Activated naive CD4-positive, alpha-beta T cell treated with anti-CD3 and anti-CD28 coated beads for 36 hours (primary cell): ENCODE measurements at regions of chr17 and their contacts with region 1.

Region 1: DNA sequence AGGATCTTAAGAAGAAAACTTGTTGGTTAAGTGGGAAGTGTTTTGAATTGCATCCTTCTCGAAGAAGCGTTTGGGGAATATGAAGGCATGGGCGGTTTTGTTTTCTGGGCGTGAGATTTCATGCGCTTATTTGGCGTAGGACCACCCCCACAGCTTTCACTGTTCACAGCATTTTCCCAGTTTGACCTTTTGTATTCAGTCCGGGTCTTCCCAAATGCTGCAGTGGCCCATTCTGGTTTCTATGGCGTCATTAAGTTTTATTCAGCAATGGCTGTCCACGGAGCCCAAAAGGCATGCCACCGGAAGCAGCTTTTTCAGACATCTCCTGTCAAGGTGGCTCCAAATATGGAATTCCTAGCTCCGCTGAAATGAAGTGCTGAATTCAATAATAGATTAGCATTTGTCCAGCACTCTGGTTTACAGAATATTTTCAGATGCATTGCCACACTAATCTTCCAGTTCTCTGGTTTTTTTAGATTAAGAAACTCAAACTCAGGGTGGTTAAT is 90.6 kb upstream of the FBXO47 start:
- DNase-seq: no peak
- H3K4me3 Mint-ChIP-seq: peak overlapping the region; percentile 84
- H3K27ac Mint-ChIP-seq: no peak overlapping the region
- H3K4me1 Mint-ChIP-seq: peaks cover 13% of the 10 kb centered on the region
- H3K27me3 Mint-ChIP-seq: no peaks in the 10 kb centered on the region

Region 2: GRCh38 chr17:39094607-39095308 is 37.0 kb after region 1 on chr17:
- CTCF ChIA-PET with region 1: interaction called, 3 read pairs
- intact Hi-C with region 1: loop called (anchors 2 kb)
- DNase-seq: no peak
- H3K4me3 Mint-ChIP-seq: no peak overlapping the region
- H3K27ac Mint-ChIP-seq: peak overlapping the region; percentile 47
- H3K4me1 Mint-ChIP-seq: peaks cover 74% of the 10 kb centered on the region
- H3K27me3 Mint-ChIP-seq: no peaks in the 10 kb centered on the region

Region 3: DNA sequence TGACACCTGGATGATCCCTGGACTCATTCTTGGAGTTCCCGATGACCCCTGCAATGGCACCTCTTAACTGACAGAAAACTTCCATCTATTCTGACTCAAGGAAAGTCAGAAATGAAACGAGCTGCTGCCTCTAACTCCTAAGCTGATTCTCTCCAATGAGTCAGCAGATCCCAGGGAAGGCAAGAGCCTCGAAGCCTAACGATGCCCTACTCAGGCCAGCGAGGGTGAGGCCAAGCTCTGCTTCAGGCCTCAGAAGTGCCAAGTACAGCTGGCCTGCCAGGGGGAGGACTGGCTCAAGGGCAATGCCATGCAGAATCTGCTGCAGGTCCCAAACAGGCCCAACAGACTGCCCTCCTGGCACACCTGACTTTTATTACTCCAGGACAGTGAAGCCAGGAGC is 57.4 kb after region 1 on chr17:
- CTCF ChIA-PET with region 1: no interaction called
- intact Hi-C with region 1: no loop called
- DNase-seq: no peak
- H3K4me3 Mint-ChIP-seq: no peak overlapping the region
- H3K27ac Mint-ChIP-seq: no peak overlapping the region
- H3K4me1 Mint-ChIP-seq: peaks cover 3% of the 10 kb centered on the region
- H3K27me3 Mint-ChIP-seq: no peaks in the 10 kb centered on the region